AG04450 (cell line): ENCODE measurements at regions of chr11 and their contacts with region 1.

Region 1: DNA sequence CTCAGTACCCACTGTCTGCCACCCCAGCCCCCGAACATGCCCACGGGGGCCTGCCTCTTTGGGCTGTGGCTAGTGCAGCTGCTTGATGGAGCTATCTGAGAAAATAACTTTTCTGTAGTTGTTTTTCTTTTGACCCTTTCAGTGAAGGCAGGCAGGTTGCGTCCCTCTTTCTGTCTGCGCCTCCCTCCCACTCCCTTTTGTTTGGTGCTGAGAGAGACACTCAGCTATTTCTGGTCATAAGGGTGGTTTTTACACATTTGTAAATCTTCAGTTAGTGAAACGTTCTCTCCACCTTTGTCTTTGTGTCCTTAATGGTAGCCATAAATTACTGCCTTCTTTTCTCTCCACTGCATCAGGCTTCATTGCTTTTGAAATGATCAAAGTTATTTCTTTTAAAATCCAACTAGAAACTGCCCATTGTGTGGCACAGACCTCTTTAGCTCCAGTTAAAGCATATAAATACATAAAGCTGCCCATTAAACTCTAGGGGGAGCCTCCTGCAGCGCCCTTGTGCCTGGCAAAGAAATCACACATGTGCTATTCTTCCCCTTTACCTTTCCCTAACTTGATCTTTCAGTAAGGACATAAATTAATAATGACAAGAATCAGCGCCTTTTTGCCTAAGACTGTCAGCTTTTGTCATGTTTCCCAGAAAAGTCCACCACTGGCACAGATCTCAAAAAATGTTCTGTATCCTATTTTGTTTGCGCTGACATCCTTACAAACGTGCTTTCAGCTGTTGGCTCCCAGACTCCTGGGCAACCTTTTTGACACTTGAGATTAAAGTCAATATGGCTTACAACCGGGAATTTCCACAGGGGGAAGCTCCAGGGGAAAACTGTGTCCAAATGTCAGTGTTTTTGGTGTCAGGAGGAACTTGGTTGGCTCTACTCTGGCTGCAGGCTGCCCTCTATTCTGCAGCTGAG is 1.7 kb upstream of the SCUBE2 start:
- DNase-seq: no peak
- H3K4me3 ChIP-seq: no peak overlapping the region
- H3K27ac ChIP-seq: no peak overlapping the region
- H3K27me3 ChIP-seq: peaks cover 11% of the 10 kb centered on the region
- CTCF ChIP-seq: peak; percentile 45

Region 2: GRCh38 chr11:9075556-9075955 is 17.6 kb before region 1 on chr11:
- CTCF ChIA-PET with region 1: interaction called, 12 read pairs
- POLR2A ChIA-PET with region 1: no interaction called
- DNase-seq: no peak
- H3K4me3 ChIP-seq: no peak overlapping the region
- H3K27ac ChIP-seq: no peak overlapping the region
- H3K27me3 ChIP-seq: peaks cover 6% of the 10 kb centered on the region
- CTCF ChIP-seq: no peak

Region 3: GRCh38 chr11:9109939-9110731 is 17.0 kb after region 1 on chr11:
- CTCF ChIA-PET with region 1: interaction called, 10 read pairs
- POLR2A ChIA-PET with region 1: no interaction called
- DNase-seq: no peak
- H3K4me3 ChIP-seq: no peak overlapping the region
- H3K27ac ChIP-seq: no peak overlapping the region
- H3K27me3 ChIP-seq: no peaks in the 10 kb centered on the region
- CTCF ChIP-seq: no peak